ENCODE measurements at regions of chr5 and their contacts with region 1.

Region 1: DNA sequence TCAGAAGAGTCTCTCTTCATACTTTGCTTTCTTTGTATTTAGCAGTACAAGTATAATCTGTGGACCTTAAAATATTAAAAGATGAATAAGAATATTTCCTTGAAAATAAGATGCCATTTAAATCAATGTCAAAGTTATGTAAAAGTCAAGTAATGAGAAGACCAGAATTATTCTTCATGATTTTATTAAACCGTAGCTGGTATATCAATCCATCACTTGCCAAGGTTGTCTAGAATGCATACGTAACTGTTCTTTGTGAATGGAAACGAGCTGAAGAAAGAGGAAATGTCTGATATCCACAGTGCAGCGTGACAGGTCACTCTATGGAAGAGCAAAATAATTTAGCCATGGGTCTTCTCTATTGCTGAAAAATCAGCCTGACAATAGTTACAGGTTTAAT is 488.7 kb upstream of the CCNG1 start:
- DNase-seq: no peak
- H3K4me3 ChIP-seq: no peak overlapping the region
- H3K4me3 Mint-ChIP-seq: no peak overlapping the region
- H3K27ac Mint-ChIP-seq: no peak overlapping the region
- H3K4me1 ChIP-seq: peaks cover 4% of the 10 kb centered on the region; the same call in 1 of the 2 replicates
- H3K4me1 Mint-ChIP-seq: peaks cover 8% of the 10 kb centered on the region
- H3K27me3 ChIP-seq: no peaks in the 10 kb centered on the region
- H3K27me3 Mint-ChIP-seq: no peaks in the 10 kb centered on the region
- CTCF ChIP-seq: no peak

Region 2: GRCh38 chr5:162911873-162912272 is 36.8 kb before region 1 on chr5:
- CTCF ChIA-PET with region 1: no interaction called
- POLR2A ChIA-PET with region 1: no interaction called
- intact Hi-C with region 1: loop called (anchors 1 kb)
- DNase-seq: no peak
- H3K4me3 ChIP-seq: no peak overlapping the region
- H3K4me3 Mint-ChIP-seq: no peak overlapping the region
- H3K27ac Mint-ChIP-seq: no peak overlapping the region
- H3K4me1 ChIP-seq: no peaks in the 10 kb centered on the region
- H3K4me1 Mint-ChIP-seq: no peaks in the 10 kb centered on the region
- H3K27me3 ChIP-seq: no peaks in the 10 kb centered on the region
- H3K27me3 Mint-ChIP-seq: peaks cover 4% of the 10 kb centered on the region
- CTCF ChIP-seq: no peak

Region 3: GRCh38 chr5:163727028-163727427 is 778.4 kb after region 1 on chr5:
- CTCF ChIA-PET with region 1: no interaction called
- POLR2A ChIA-PET with region 1: no interaction called
- intact Hi-C with region 1: no loop called
- DNase-seq: no peak
- H3K4me3 ChIP-seq: no peak overlapping the region
- H3K4me3 Mint-ChIP-seq: no peak overlapping the region
- H3K27ac Mint-ChIP-seq: no peak overlapping the region
- H3K4me1 ChIP-seq: peaks cover 14% of the 10 kb centered on the region
- H3K4me1 Mint-ChIP-seq: peaks cover 7% of the 10 kb centered on the region
- H3K27me3 ChIP-seq: no peaks in the 10 kb centered on the region
- H3K27me3 Mint-ChIP-seq: no peaks in the 10 kb centered on the region
- CTCF ChIP-seq: no peak

Measured in Caco-2 (cell line).